ENCODE measurements at regions of chr22 and their contacts with region 1.

Region 1: DNA sequence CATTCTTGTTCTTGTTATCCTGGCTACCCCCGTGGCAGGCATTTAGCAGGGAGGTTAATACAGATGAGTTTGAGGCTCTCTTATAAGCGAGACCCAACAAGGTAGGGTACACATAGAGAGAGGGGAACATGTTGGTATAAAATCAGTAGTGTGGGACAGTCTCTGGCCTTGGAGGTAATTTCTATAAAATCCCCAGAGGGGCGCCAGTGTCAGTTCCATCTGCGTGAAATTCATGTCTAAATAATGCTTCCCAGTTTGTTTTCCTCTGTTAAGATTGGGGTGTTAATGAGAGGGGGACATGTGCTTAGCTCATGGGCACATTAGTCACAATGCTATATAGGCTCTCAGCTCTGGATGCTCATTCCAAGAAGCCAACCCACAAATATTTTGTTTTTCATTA is 150.7 kb downstream of the MYO18B start:
- DNase-seq: no peak
- H3K4me3 ChIP-seq: no peak overlapping the region
- H3K27ac ChIP-seq: no peak overlapping the region
- H3K4me1 ChIP-seq: no peaks in the 10 kb centered on the region
- H3K27me3 ChIP-seq: no peaks in the 10 kb centered on the region
- CTCF ChIP-seq: no peak

Region 2: DNA sequence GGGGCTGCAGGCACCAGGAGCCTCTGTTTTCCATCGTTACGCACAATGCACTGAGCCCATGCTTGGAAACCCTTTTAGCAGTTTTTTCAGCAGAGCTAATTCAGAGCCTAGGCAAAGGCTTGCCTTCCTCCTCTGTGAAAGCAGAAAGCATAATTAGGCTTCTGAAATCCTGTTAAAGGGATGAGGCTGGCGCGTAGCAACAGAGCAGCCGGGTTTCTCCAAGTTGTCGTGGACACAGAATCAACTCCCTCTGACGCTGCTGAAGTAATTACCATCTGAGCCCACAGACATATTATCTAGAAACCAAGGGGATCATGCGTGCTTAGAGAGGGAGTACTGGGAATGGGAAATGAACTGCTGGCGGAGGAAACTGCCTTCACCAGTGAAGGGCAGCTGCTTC is 65.3 kb before region 1 on chr22:
- CTCF ChIA-PET with region 1: no interaction called
- dilution Hi-C with region 1: loop called (anchors 5 kb)
- in situ Hi-C with region 1: no loop called
- intact Hi-C with region 1: no loop called
- DNase-seq: no peak
- H3K4me3 ChIP-seq: no peak overlapping the region
- H3K27ac ChIP-seq: no peak overlapping the region
- H3K4me1 ChIP-seq: peaks cover 5% of the 10 kb centered on the region
- H3K27me3 ChIP-seq: no peaks in the 10 kb centered on the region
- CTCF ChIP-seq: no peak

Measured in mammary epithelial cell (primary cell).